ENCODE measurements at regions of chr12 and their contacts with region 1.

Region 1: GRCh38 chr12:31634620-31635019 is 24.9 kb upstream of the ETFBKMT start:
- DNase-seq: no peak
- ATAC-seq: no peak
- H3K4me3 ChIP-seq: no peak overlapping the region
- H3K27ac ChIP-seq: no peak overlapping the region
- H3K4me1 ChIP-seq: peaks cover 0 to 10% of the 10 kb centered on the region in 2 donors
- H3K27me3 ChIP-seq: no peaks in the 10 kb centered on the region
- CTCF ChIP-seq: no peak

Region 2: DNA sequence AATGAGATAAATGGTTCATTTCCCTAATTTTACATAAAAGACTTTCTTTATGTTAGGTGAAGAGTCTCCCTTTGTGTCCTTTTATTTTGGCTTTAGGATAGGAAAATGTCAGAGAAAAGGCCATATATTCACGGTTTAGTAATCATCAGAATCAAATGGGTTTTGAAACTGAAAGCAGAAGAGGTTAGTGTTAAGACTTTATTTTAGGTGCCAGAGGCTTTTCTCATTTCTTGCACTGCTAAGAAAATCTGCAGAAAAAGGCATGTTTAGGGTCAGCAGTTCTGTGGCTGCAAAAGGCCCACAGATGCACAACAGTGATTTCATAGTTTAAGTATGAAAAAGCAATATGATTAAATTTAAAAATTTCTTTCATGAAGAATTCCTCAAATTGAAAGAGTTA is 228.3 kb before region 1 on chr12:
- intact Hi-C with region 1: loop called in 1 of 2 experiments (anchors 5 kb)
- DNase-seq: no peak
- ATAC-seq: no peak
- H3K4me3 ChIP-seq: no peak overlapping the region
- H3K27ac ChIP-seq: no peak overlapping the region
- H3K4me1 ChIP-seq: no peaks in the 10 kb centered on the region
- H3K27me3 ChIP-seq: no peaks in the 10 kb centered on the region
- CTCF ChIP-seq: no peak